ENCODE measurements at regions of chr16 and their contacts with region 1.

Region 1: DNA sequence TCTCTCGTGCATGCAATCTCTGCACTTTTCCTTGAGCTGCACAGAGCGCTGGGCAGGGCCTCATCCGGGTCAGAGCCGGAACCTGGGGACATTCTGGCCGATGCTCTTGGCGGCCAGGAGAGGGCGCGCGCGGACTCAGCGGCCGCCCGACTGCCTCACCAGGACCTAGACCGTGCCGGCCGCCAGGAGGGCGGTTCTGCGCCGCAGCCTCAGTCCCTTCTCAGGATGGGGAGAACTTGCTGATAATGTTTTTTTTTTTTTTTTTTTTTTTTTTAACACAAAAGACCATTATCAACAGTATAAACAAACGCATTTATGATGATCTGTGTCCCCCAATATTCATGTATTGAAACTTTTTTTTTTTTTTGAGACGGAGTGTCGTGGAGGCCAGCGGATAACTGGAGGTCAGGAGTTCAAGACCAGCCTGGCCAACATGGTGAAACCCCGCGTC is 8.1 kb upstream of the FLYWCH2 start:
- DNase-seq: no peak
- ATAC-seq: peak; percentile 99
- H3K4me3 ChIP-seq: peak overlapping the region in 1 of 2 experiments; percentile 33; a peak in 1 of 4 replicates
- H3K27ac ChIP-seq: no peak overlapping the region; the same call in 1 of the 2 replicates
- H3K4me1 ChIP-seq: peaks cover 11% of the 10 kb centered on the region; the same call in 1 of the 2 replicates
- H3K27me3 ChIP-seq: no peaks in the 10 kb centered on the region
- CTCF ChIP-seq: peak; percentile 99

Region 2: GRCh38 chr16:2895815-2896214 is 20.9 kb after region 1 on chr16:
- CTCF ChIA-PET with region 1: no interaction called
- POLR2A ChIA-PET with region 1: no interaction called
- in situ Hi-C with region 1: no loop called
- intact Hi-C with region 1: no loop called
- DNase-seq: no peak
- ATAC-seq: peak; percentile 60
- H3K4me3 ChIP-seq: no peak overlapping the region
- H3K27ac ChIP-seq: no peak overlapping the region
- H3K4me1 ChIP-seq: no peaks in the 10 kb centered on the region; the same call in 1 of the 2 replicates
- H3K27me3 ChIP-seq: no peaks in the 10 kb centered on the region
- CTCF ChIP-seq: no peak

Region 3: DNA sequence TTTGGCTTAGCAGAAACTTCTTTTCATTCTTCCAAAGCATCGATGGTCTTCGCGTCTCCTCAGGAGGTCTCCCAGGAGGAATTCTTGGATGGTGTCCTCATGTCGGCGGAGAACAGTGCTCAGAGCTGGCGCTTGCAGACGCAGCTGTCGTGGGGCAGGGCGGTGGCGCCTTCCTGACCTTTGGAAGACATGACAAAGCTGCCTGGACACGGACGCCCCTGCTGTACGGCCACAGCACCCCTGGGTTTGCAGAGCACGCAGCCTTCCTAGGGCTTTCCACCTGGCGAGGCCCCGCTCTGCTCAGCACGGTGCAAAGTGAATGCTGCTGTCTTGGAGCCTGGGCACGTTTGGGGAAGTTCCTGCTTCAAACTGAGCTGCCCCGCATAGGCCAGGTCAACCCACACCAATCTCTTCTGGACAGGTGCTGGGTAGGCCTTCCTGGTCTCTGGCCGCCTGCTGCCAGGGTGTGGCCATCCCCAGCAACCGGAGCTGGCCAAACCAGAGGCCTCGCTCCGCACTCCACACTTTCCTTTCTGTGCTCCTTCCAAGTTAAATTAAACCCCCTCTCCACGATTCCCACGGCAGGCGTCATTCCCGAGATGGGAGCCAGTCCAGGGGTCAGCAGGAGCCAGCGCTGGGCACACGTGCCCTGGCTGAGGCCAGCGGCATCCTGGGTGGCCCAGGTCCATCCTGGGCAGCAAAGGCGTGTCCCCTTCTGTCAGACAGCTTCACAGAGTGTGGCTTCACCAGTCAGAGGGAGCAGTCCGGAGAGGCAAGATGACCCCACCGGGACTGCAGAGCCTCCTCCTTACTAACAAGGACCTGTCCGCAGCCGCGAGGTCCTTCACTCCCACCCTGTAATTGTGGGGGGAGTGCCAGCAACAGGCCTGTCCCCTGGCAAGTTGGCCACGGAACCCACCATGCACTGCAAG is 74.1 kb after region 1 on chr16:
- CTCF ChIA-PET with region 1: no interaction called
- POLR2A ChIA-PET with region 1: no interaction called
- in situ Hi-C with region 1: no loop called
- intact Hi-C with region 1: no loop called
- DNase-seq: no peak
- ATAC-seq: peak; percentile 40
- H3K4me3 ChIP-seq: no peak overlapping the region
- H3K27ac ChIP-seq: no peak overlapping the region
- H3K4me1 ChIP-seq: no peaks in the 10 kb centered on the region
- H3K27me3 ChIP-seq: no peaks in the 10 kb centered on the region
- CTCF ChIP-seq: no peak

Region 4: GRCh38 chr16:3198334-3199072 is 323.6 kb after region 1 on chr16:
- CTCF ChIA-PET with region 1: no interaction called
- POLR2A ChIA-PET with region 1: no interaction called
- in situ Hi-C with region 1: no loop called
- intact Hi-C with region 1: no loop called
- DNase-seq: no peak
- ATAC-seq: no peak
- H3K4me3 ChIP-seq: no peak overlapping the region
- H3K27ac ChIP-seq: no peak overlapping the region
- H3K4me1 ChIP-seq: peaks cover 6% of the 10 kb centered on the region; the same call in 1 of the 2 replicates
- H3K27me3 ChIP-seq: no peaks in the 10 kb centered on the region
- CTCF ChIP-seq: no peak

Region 5: GRCh38 chr16:3971261-3971660 is 1096.3 kb after region 1 on chr16:
- CTCF ChIA-PET with region 1: interaction called, 11 read pairs
- POLR2A ChIA-PET with region 1: no interaction called
- in situ Hi-C with region 1: no loop called
- intact Hi-C with region 1: no loop called
- DNase-seq: no peak
- ATAC-seq: no peak
- H3K4me3 ChIP-seq: no peak overlapping the region
- H3K27ac ChIP-seq: no peak overlapping the region
- H3K4me1 ChIP-seq: no peaks in the 10 kb centered on the region
- H3K27me3 ChIP-seq: no peaks in the 10 kb centered on the region
- CTCF ChIP-seq: no peak